ENCODE measurements at regions of chr2 and their contacts with region 1.

Region 1: GRCh38 chr2:27308359-27308881 is at the start of gene UCN:
- DNase-seq: no peak
- ATAC-seq: no peak
- H3K4me3 ChIP-seq: no peak within 1 kb of the TSS
- H3K4me3 Mint-ChIP-seq: no peak within 1 kb of the TSS
- H3K27ac ChIP-seq: no peak within 1 kb of the TSS
- H3K27ac Mint-ChIP-seq: no peak within 1 kb of the TSS
- H3K4me1 ChIP-seq: peaks cover 14% of the 10 kb centered on the region in 2 donors
- H3K4me1 Mint-ChIP-seq: peaks cover 7% of the 10 kb centered on the region
- H3K27me3 ChIP-seq: peaks cover 0 to 29% (median 9%) of the 10 kb centered on the region in 4 experiments
- H3K27me3 Mint-ChIP-seq: peaks cover 21% of the 10 kb centered on the region
- CTCF ChIP-seq: no peak
- total RNA-seq, gene UCN: 2.7 and 3.6 TPM in 2 replicates

Region 2: DNA sequence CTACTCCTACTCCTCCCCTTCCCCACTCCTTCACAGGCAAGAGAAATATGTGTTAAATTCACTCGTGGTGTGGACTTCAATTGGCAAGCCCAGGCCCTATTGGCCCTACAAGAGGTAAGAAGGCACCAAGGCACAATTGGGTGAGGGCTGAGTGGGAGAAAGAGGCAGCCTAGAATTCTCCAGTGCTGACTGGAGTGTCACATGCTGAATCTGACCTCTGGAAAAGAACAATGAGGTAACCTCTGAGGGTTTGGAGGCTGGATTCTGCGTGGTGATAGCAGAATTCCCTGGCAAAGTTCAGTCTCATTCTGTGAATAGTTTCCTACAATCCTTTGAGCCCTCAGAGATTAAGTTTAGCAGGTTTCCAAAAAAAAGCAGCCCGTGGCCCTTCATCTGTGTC is 515.7 kb before region 1 on chr2:
- CTCF ChIA-PET with region 1: no interaction called
- POLR2A ChIA-PET with region 1: no interaction called
- intact Hi-C with region 1: no loop called
- DNase-seq: no peak
- ATAC-seq: no peak
- H3K4me3 ChIP-seq: no peak overlapping the region
- H3K4me3 Mint-ChIP-seq: no peak overlapping the region
- H3K27ac ChIP-seq: no peak overlapping the region
- H3K27ac Mint-ChIP-seq: no peak overlapping the region
- H3K4me1 ChIP-seq: no peaks in the 10 kb centered on the region
- H3K4me1 Mint-ChIP-seq: peaks cover 2% of the 10 kb centered on the region
- H3K27me3 ChIP-seq: no peaks in the 10 kb centered on the region
- H3K27me3 Mint-ChIP-seq: peaks cover 2% of the 10 kb centered on the region
- CTCF ChIP-seq: no peak

Region 3: DNA sequence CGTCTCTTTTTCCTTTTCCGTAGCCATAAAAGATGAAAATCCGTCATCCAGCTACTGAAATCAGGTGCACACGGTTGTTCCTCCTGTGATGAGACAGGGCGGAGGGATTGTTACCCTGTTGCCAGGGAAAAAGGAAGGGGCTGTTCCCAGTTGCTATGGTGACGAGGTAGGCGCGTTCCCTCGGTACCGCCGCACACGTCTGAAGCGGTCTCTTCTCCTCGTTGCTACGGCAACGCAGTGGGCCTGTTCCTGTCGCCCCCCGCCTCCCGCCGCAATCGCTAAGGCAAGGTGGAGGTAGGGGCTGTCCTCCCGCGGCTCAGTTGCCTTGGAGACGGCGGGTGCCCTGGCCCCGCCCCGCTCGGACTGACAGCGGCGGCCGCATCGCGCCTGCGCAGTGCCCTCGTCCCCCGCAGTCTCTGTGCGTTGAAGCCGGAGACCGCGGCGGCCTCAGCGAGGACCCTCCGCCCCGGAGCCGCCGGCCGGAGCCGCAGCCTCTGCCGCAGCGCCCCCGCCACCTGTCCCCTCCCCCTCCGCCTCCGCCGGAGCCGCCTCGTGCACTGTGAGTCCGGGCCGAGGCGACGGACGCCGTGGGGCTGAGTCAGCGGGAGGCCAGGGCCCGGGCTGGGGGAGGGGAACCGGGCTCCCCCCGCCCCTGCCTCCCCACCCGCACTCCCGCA is 338.0 kb before region 1 on chr2 and contains the start of gene MAPRE3:
- CTCF ChIA-PET with region 1: no interaction called
- POLR2A ChIA-PET with region 1: no interaction called
- intact Hi-C with region 1: no loop called
- DNase-seq: peak; percentile 92
- ATAC-seq: peak; percentile 94
- H3K4me3 ChIP-seq: peak within 1 kb of the TSS; percentile 59 to 70 (median 62)
- H3K4me3 Mint-ChIP-seq: peak within 1 kb of the TSS; percentile 91
- H3K27ac ChIP-seq: peak within 1 kb of the TSS in 1 of 2 donors; percentile 47
- H3K27ac Mint-ChIP-seq: peak within 1 kb of the TSS; percentile 59
- H3K4me1 ChIP-seq: peaks cover 11 to 12% of the 10 kb centered on the region in 2 donors
- H3K4me1 Mint-ChIP-seq: peaks cover 19% of the 10 kb centered on the region
- H3K27me3 ChIP-seq: peaks cover 2 to 11% (median 5%) of the 10 kb centered on the region in 4 experiments
- H3K27me3 Mint-ChIP-seq: peaks cover 26% of the 10 kb centered on the region
- CTCF ChIP-seq: no peak
- total RNA-seq, gene MAPRE3: 5.4 and 7.1 TPM in 2 replicates

Region 4: DNA sequence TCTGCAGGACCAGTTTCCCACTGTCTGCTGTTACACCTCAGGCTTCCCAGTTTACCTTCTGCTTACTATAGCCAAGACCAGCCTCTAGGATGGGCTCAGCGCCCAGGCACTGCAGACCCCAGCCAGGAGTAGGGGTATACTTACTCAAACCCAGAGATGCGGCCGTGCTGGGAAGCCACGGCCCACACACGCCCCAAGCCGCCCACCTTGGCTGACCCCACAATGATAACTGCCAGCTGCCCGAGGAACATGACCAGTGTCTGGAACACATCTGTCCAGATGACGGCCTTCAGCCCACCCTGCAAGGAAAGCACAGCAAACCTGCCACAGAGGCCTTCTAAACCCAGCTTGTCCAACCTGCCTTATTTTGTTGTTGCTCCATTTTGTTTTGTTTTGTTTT is 103.2 kb before region 1 on chr2:
- CTCF ChIA-PET with region 1: no interaction called
- POLR2A ChIA-PET with region 1: interaction called, 14 read pairs
- intact Hi-C with region 1: no loop called
- DNase-seq: no peak
- ATAC-seq: no peak
- H3K4me3 ChIP-seq: no peak overlapping the region
- H3K4me3 Mint-ChIP-seq: no peak overlapping the region
- H3K27ac ChIP-seq: no peak overlapping the region
- H3K27ac Mint-ChIP-seq: no peak overlapping the region
- H3K4me1 ChIP-seq: no peaks in the 10 kb centered on the region
- H3K4me1 Mint-ChIP-seq: peaks cover 3% of the 10 kb centered on the region
- H3K27me3 ChIP-seq: no peaks in the 10 kb centered on the region
- H3K27me3 Mint-ChIP-seq: no peaks in the 10 kb centered on the region
- CTCF ChIP-seq: no peak